HCT116 (cell line): ENCODE measurements at regions of chr1 and their contacts with region 1.

Region 1: DNA sequence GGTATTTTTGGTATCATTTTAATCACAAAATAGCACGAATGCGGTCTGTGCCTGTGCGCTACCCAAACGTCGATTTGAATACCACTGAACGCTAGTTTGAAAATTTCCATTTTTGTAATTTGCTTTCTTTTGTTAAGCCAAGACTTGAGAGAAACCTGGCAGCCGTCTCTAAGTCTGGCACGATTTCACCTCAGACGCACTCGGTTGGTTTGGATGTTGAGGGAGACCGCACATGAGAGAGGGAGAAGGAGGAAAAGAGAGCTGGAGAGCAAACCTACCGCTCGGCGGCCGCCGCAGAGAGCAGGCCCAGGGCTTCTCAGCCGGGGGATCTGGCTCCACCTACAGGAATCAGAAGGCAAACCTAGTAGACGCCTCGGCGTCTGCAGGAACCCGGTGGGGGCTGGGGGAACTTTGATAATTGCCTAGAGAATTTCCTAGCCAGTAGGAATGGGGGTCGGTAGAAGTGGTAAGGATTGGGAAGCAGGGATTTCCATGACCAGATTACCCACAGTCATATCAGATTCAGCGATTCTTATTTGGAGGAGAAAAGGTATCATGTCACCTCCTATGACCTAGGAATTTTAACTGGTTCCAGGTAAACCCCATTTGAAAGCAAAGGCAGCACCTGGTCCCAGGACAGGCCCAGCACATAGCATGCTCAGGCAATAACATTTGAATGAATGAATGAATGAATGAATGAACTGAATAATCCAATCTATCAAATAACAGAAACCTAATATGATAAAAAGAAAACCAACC is 83.2 kb downstream of the TM2D1 start:
- DNase-seq: peak; percentile 35
- ATAC-seq: peak; percentile 100
- H3K4me3 ChIP-seq: peak overlapping the region in 1 of 2 experiments; percentile 30; a peak in 3 of 4 replicates
- H3K27ac ChIP-seq: no peak overlapping the region
- H3K4me1 ChIP-seq: peaks cover 2 to 11% of the 10 kb centered on the region in 2 experiments; a peak in 3 of 4 replicates
- H3K27me3 ChIP-seq: no peaks in the 10 kb centered on the region
- CTCF ChIP-seq: peak; percentile 61 to 68 (median 64); a peak in 5 of 6 replicates
- POLR2A ChIP-seq: no peak
- RAD21 ChIP-seq: peak; percentile 70

Region 2: GRCh38 chr1:60978421-60979357 is 663.1 kb before region 1 on chr1:
- CTCF ChIA-PET with region 1: interaction called, 4 read pairs
- POLR2A ChIA-PET with region 1: no interaction called
- RAD21 ChIA-PET with region 1: no interaction called
- intact Hi-C with region 1: loop called (anchors 10 kb)
- DNase-seq: no peak
- ATAC-seq: peak; percentile 95
- H3K4me3 ChIP-seq: no peak overlapping the region
- H3K27ac ChIP-seq: no peak overlapping the region
- H3K4me1 ChIP-seq: no peaks in the 10 kb centered on the region
- H3K27me3 ChIP-seq: no peaks in the 10 kb centered on the region
- CTCF ChIP-seq: peak; percentile 71 to 74 (median 74); a peak in 5 of 6 replicates
- POLR2A ChIP-seq: no peak
- RAD21 ChIP-seq: peak; percentile 88

Region 3: DNA sequence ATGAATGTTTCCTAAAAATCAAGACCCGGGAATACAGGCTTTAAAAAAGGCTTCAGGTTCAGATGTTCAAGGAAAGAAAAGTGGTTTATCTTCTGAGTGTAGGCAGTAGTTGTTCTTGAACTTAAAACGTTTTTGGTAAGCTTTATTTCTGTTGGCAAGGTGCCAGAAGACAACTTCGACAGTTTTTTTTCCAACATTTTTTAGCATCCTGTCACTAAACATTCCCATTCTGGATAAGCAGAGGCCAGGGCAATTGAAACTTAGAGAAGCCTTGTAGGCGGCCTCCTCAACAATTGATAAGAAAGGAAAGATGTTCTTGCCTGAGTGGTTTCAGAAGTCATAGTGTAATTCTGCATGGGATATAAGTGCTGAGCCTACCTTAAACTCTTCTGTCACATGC is 167.2 kb after region 1 on chr1:
- CTCF ChIA-PET with region 1: no interaction called
- POLR2A ChIA-PET with region 1: no interaction called
- RAD21 ChIA-PET with region 1: no interaction called
- intact Hi-C with region 1: no loop called
- DNase-seq: no peak
- ATAC-seq: no peak
- H3K4me3 ChIP-seq: no peak overlapping the region
- H3K27ac ChIP-seq: no peak overlapping the region
- H3K4me1 ChIP-seq: no peaks in the 10 kb centered on the region
- H3K27me3 ChIP-seq: no peaks in the 10 kb centered on the region
- CTCF ChIP-seq: no peak
- POLR2A ChIP-seq: no peak
- RAD21 ChIP-seq: no peak